ENCODE measurements at regions of chr2 and their contacts with region 1.

Region 1: DNA sequence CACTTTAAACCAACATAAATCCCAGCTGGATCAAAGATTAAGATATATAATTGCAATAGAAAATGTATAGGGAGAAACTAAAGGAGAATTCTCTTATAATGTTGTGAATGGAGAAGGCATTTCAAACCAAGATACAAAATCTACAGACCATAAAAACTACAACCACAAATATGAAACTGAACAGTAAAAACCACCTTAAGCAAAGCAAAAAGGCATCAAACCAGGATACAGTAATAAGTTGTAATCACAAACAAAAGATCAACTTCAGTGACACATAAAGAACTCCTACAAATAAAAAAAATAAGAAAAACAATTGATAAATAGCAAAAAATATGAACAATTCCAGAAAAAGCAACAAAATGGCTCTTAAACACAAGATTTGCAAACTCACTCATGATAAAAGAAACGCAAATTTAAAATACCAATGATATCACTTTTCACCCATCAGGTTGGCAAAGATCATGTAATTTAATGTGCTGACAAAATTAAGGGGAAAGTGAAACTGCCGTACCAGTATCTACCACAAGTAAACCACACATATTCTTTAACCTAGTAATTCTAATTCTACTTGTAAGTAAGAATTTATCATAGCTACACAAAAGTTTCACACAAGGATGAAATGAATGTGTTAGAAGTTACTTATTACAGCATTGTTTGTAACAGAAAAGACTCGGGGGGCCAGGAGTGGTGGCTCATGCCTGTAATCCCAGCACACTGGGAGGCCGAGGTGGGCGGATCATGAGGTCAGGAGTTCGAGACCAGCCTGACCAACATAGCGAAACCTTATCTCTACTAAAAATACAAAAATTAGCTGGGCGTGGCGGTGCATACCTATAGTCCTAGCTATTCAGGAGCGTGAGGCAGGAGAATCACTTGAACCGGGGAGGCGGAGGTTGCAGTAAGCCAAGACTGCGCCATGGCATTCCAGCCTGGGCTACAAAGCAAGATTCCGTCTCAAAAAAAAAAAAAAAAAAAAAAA is 101.9 kb downstream of the USP34 start:
- DNase-seq: peak in 1 of 5 donors; percentile 24
- H3K4me3 ChIP-seq: no peak overlapping the region
- H3K4me3 Mint-ChIP-seq: peak overlapping the region in 3 of 7 donors; percentile 26 to 65 (median 53)
- H3K27ac ChIP-seq: no peak overlapping the region
- H3K27ac Mint-ChIP-seq: peak overlapping the region; percentile 6 to 76 (median 54)
- H3K4me1 ChIP-seq: peaks cover 5% of the 10 kb centered on the region
- H3K4me1 Mint-ChIP-seq: peaks cover 51 to 68% (median 59%) of the 10 kb centered on the region in 3 donors
- H3K27me3 ChIP-seq: no peaks in the 10 kb centered on the region
- H3K27me3 Mint-ChIP-seq: no peaks in the 10 kb centered on the region

Region 2: GRCh38 chr2:61255580-61256437 is 113.2 kb before region 1 on chr2:
- CTCF ChIA-PET with region 1: no interaction called
- POLR2A ChIA-PET with region 1: interaction called, 10 read pairs
- DNase-seq: no peak
- H3K4me3 ChIP-seq: no peak overlapping the region
- H3K4me3 Mint-ChIP-seq: no peak overlapping the region
- H3K27ac ChIP-seq: no peak overlapping the region
- H3K27ac Mint-ChIP-seq: no peak overlapping the region
- H3K4me1 ChIP-seq: no peaks in the 10 kb centered on the region
- H3K4me1 Mint-ChIP-seq: peaks cover 0 to 5% (median 0%) of the 10 kb centered on the region in 3 donors
- H3K27me3 ChIP-seq: no peaks in the 10 kb centered on the region
- H3K27me3 Mint-ChIP-seq: no peaks in the 10 kb centered on the region

Region 3: GRCh38 chr2:61288070-61288841 is 80.7 kb before region 1 on chr2:
- CTCF ChIA-PET with region 1: no interaction called
- POLR2A ChIA-PET with region 1: no interaction called
- DNase-seq: no peak
- H3K4me3 ChIP-seq: no peak overlapping the region
- H3K4me3 Mint-ChIP-seq: no peak overlapping the region
- H3K27ac ChIP-seq: peak overlapping the region; percentile 41
- H3K27ac Mint-ChIP-seq: peak overlapping the region in 4 of 8 donors; percentile 27 to 74 (median 60)
- H3K4me1 ChIP-seq: no peaks in the 10 kb centered on the region
- H3K4me1 Mint-ChIP-seq: peaks cover 4 to 25% (median 7%) of the 10 kb centered on the region in 3 donors
- H3K27me3 ChIP-seq: no peaks in the 10 kb centered on the region
- H3K27me3 Mint-ChIP-seq: no peaks in the 10 kb centered on the region

Measured in CD8-positive, alpha-beta memory T cell (primary cell).